IMR-90 (cell line): ENCODE measurements at regions of chr3 and their contacts with region 1.

Region 1: GRCh38 chr3:24145981-24146822 is 201.1 kb downstream of the NR1D2 start:
- DNase-seq: peak; percentile 90
- ATAC-seq: peak; percentile 84
- H3K4me3 ChIP-seq: peak overlapping the region; percentile 17; the same call in 1 of the 2 replicates
- H3K27ac ChIP-seq: peak overlapping the region; percentile 90
- H3K4me1 ChIP-seq: peaks cover 3% of the 10 kb centered on the region
- H3K27me3 ChIP-seq: no peaks in the 10 kb centered on the region
- CTCF ChIP-seq: no peak
- POLR2A ChIP-seq: peak; percentile 41; the same call in 1 of the 2 replicates
- RAD21 ChIP-seq: no peak

Region 2: DNA sequence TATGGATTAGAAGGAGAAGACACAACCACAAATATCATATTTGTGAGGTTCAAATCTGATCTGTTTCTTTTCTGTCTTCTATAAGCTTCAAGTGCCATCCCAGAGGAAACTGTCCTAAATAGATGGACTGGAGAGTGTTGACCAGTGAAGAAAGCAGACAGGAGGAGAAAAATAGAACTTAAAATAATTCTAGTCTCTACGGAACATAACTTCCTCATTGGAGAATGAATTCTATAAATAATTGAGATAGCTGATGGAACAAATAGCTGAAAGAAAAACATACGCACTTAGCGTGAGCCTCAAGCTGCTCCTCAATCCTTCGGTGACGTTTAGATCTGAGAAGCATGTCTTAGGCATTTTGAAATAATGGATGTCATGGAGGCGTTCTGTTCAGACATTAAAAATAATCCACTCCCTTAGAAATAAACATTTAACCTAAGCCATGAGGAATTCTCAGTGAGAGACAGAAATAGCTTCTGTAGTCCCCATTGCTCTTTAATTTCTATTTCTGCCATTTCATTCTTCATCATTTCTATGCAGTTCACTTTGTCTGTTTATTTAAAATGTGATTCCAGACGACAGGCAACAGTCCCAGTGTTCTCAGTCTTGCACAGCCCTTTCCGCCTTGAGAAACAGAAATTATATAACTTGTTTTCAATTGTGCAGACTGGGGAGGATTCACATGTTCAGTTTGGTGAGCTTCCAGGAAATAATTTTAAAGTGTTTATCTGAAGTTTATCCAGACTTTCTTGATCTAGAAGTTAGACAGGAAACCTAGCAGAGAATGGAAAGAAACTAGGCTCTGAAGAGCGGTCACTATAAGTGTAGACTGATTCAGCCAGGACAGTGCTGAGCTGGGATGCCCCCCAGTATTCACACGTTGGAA is 103.8 kb before region 1 on chr3:
- CTCF ChIA-PET with region 1: no interaction called
- POLR2A ChIA-PET with region 1: no interaction called
- dilution Hi-C with region 1: no loop called
- in situ Hi-C with region 1: no loop called
- intact Hi-C with region 1: loop called (anchors 2 kb)
- DNase-seq: peak; percentile 58
- ATAC-seq: peak; percentile 79
- H3K4me3 ChIP-seq: no peak overlapping the region
- H3K27ac ChIP-seq: no peak overlapping the region
- H3K4me1 ChIP-seq: peaks cover 4% of the 10 kb centered on the region; the same call in 1 of the 2 replicates
- H3K27me3 ChIP-seq: no peaks in the 10 kb centered on the region
- CTCF ChIP-seq: no peak
- POLR2A ChIP-seq: no peak
- RAD21 ChIP-seq: no peak

Region 3: GRCh38 chr3:24135280-24135679 is 10.9 kb before region 1 on chr3:
- CTCF ChIA-PET with region 1: no interaction called
- POLR2A ChIA-PET with region 1: no interaction called
- dilution Hi-C with region 1: no loop called
- in situ Hi-C with region 1: no loop called
- intact Hi-C with region 1: no loop called
- DNase-seq: no peak
- ATAC-seq: no peak
- H3K4me3 ChIP-seq: no peak overlapping the region
- H3K27ac ChIP-seq: no peak overlapping the region
- H3K4me1 ChIP-seq: no peaks in the 10 kb centered on the region
- H3K27me3 ChIP-seq: no peaks in the 10 kb centered on the region
- CTCF ChIP-seq: no peak
- POLR2A ChIP-seq: no peak
- RAD21 ChIP-seq: no peak